Left colon (tissue), 2 donors: ENCODE measurements at regions of chrX and their contacts with region 1.

Region 1: GRCh38 chrX:74536152-74536831 is 78.1 kb downstream of the RLIM start:
- DNase-seq: peak; percentile 70 to 84
- ATAC-seq: peak; percentile 80

Region 2: GRCh38 chrX:74382613-74383012 is 153.7 kb before region 1 on chrX:
- intact Hi-C with region 1: loop called in 1 of 2 experiments (anchors 5 kb)
- DNase-seq: peak; percentile 47 to 75
- ATAC-seq: peak; percentile 88

Region 3: GRCh38 chrX:74614093-74614909 is 78.0 kb after region 1 on chrX and contains the start of gene RLIM:
- intact Hi-C with region 1: no loop called
- DNase-seq: peak; percentile 90 to 95
- ATAC-seq: peak; percentile 99
- total RNA-seq, gene RLIM: 20.2 to 20.6 TPM

Region 4: GRCh38 chrX:74704101-74704500 is 167.8 kb after region 1 on chrX:
- intact Hi-C with region 1: no loop called
- DNase-seq: no peak
- ATAC-seq: no peak